ENCODE measurements at regions of chr6 and their contacts with region 1.

Region 1: GRCh38 chr6:26473758-26474438 is 16.1 kb downstream of the BTN2A1 start:
- DNase-seq: peak; percentile 91 to 94 (median 92)
- H3K4me3 ChIP-seq: peak overlapping the region; percentile 63 to 73
- H3K4me3 Mint-ChIP-seq: peak overlapping the region; percentile 84 to 99 (median 94)
- H3K27ac ChIP-seq: peak overlapping the region; percentile 81
- H3K27ac Mint-ChIP-seq: peak overlapping the region; percentile 99 to 100 (median 99)
- H3K4me1 ChIP-seq: peaks cover 52% of the 10 kb centered on the region
- H3K4me1 Mint-ChIP-seq: peaks cover 37 to 72% (median 51%) of the 10 kb centered on the region in 4 donors
- H3K27me3 ChIP-seq: no peaks in the 10 kb centered on the region
- H3K27me3 Mint-ChIP-seq: no peaks in the 10 kb centered on the region

Region 2: DNA sequence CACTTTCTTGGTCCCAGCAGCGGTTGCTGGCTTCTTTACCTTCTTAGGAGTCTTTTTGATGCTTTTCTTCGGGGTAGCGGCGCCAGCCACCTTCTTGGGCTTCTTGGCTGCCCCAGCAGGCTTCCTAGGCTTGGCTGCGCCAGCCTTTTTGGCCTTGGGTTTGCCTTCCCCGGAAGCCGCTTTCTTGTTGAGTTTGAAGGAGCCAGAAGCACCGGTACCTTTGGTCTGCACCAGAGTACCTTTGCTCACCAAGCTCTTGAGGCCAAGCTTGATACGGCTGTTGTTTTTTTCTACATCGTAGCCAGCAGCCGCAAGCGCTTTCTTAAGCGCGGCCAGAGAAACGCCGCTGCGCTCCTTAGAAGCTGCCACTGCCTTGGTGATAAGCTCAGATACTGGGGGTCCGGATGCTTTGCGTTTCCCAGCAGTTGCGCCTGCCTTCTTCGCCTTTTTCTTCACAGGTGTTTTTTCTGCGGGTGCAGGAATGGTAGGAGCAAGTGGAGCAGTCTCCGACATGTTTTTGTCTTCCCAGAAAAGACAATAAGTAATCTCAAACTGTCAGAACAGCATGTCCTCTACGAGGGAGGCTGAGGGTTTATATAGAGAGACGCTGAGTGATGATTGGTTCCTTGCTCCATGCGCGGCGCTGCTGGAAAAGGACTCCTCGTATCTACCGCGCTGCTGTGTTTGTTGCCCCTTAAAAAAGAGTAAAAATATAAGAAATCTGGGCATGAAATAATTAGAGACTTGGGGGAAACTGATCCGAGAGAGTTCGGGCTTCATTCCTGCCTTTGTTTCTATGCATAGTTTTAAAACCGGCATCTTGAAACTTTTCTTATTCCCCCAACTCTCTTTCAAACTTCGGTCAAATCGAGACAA is 239.2 kb before region 1 on chr6:
- CTCF ChIA-PET with region 1: interaction called, 3 read pairs
- POLR2A ChIA-PET with region 1: interaction called, 13 read pairs
- intact Hi-C with region 1: no loop called
- DNase-seq: peak; percentile 70 to 87 (median 85)
- H3K4me3 ChIP-seq: peak overlapping the region; percentile 66 to 95
- H3K4me3 Mint-ChIP-seq: peak overlapping the region; percentile 93 to 99 (median 96)
- H3K27ac ChIP-seq: peak overlapping the region; percentile 83
- H3K27ac Mint-ChIP-seq: peak overlapping the region; percentile 90 to 99 (median 96)
- H3K4me1 ChIP-seq: peaks cover 23% of the 10 kb centered on the region
- H3K4me1 Mint-ChIP-seq: peaks cover 18 to 43% (median 26%) of the 10 kb centered on the region in 4 donors
- H3K27me3 ChIP-seq: no peaks in the 10 kb centered on the region
- H3K27me3 Mint-ChIP-seq: no peaks in the 10 kb centered on the region

Region 3: GRCh38 chr6:26383624-26384417 is 90.1 kb before region 1 on chr6:
- CTCF ChIA-PET with region 1: no interaction called
- POLR2A ChIA-PET with region 1: interaction called, 14 read pairs
- intact Hi-C with region 1: no loop called
- DNase-seq: no peak
- H3K4me3 ChIP-seq: peak overlapping the region; percentile 80 to 85
- H3K4me3 Mint-ChIP-seq: peak overlapping the region; percentile 98 to 100 (median 99)
- H3K27ac ChIP-seq: peak overlapping the region; percentile 88
- H3K27ac Mint-ChIP-seq: peak overlapping the region; percentile 70 to 100 (median 98)
- H3K4me1 ChIP-seq: peaks cover 10% of the 10 kb centered on the region
- H3K4me1 Mint-ChIP-seq: peaks cover 18 to 36% (median 31%) of the 10 kb centered on the region in 4 donors
- H3K27me3 ChIP-seq: no peaks in the 10 kb centered on the region
- H3K27me3 Mint-ChIP-seq: no peaks in the 10 kb centered on the region

Region 4: GRCh38 chr6:26445934-26446667 is 27.8 kb before region 1 on chr6:
- CTCF ChIA-PET with region 1: interaction called, 4 read pairs
- POLR2A ChIA-PET with region 1: interaction called, 30 read pairs
- intact Hi-C with region 1: no loop called
- DNase-seq: peak; percentile 12 to 66 (median 17)
- H3K4me3 ChIP-seq: peak overlapping the region in 1 of 2 donors; percentile 9
- H3K4me3 Mint-ChIP-seq: peak overlapping the region; percentile 12 to 87 (median 72)
- H3K27ac ChIP-seq: peak overlapping the region; percentile 55
- H3K27ac Mint-ChIP-seq: peak overlapping the region; percentile 79 to 94 (median 91)
- H3K4me1 ChIP-seq: peaks cover 56% of the 10 kb centered on the region
- H3K4me1 Mint-ChIP-seq: peaks cover 35 to 68% (median 57%) of the 10 kb centered on the region in 4 donors
- H3K27me3 ChIP-seq: no peaks in the 10 kb centered on the region
- H3K27me3 Mint-ChIP-seq: no peaks in the 10 kb centered on the region

Region 5: DNA sequence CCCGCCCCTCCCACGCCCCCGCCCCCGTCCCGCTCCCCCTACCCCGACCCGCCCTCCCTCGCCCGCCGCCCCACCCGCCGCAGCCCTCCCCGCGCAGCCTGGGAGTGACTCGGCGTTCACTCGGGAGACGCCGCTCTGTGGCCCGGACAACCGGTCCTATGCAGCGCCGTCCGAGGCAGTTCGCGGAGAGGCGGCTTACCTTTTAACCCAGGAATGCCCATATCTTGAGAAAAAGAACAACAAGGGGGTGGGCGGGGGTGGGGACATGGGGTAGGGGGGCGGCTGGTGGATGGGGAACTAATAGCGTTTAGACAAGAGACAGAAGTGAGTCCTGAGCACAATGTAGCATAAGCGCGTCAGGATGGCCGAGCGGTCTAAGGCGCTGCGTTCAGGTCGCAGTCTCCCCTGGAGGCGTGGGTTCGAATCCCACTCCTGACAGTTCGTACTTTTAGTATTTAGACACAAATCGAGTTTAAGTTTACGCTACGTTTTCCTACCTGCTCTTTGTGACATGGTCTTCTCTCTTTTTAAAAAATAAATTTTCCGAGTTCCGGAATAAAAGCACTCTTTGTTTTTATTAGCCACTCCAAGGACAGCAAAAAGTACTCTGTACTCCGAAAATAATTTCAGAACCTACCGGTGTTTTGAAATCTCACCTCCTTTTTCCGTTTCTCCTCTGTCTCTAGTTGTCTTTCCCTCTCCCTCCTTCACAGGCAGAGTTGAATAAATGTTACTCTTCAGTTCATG is 47.1 kb after region 1 on chr6:
- CTCF ChIA-PET with region 1: no interaction called
- POLR2A ChIA-PET with region 1: interaction called, 77 read pairs
- intact Hi-C with region 1: loop called (anchors 1 kb)
- DNase-seq: peak; percentile 87 to 89 (median 88)
- H3K4me3 ChIP-seq: peak overlapping the region; percentile 64 to 69
- H3K4me3 Mint-ChIP-seq: peak overlapping the region; percentile 80 to 97 (median 92)
- H3K27ac ChIP-seq: peak overlapping the region; percentile 64
- H3K27ac Mint-ChIP-seq: peak overlapping the region; percentile 82 to 99 (median 96)
- H3K4me1 ChIP-seq: peaks cover 8% of the 10 kb centered on the region
- H3K4me1 Mint-ChIP-seq: peaks cover 27 to 44% (median 30%) of the 10 kb centered on the region in 4 donors
- H3K27me3 ChIP-seq: no peaks in the 10 kb centered on the region
- H3K27me3 Mint-ChIP-seq: peaks cover 1 to 2% of the 10 kb centered on the region in 2 donors

Region 6: DNA sequence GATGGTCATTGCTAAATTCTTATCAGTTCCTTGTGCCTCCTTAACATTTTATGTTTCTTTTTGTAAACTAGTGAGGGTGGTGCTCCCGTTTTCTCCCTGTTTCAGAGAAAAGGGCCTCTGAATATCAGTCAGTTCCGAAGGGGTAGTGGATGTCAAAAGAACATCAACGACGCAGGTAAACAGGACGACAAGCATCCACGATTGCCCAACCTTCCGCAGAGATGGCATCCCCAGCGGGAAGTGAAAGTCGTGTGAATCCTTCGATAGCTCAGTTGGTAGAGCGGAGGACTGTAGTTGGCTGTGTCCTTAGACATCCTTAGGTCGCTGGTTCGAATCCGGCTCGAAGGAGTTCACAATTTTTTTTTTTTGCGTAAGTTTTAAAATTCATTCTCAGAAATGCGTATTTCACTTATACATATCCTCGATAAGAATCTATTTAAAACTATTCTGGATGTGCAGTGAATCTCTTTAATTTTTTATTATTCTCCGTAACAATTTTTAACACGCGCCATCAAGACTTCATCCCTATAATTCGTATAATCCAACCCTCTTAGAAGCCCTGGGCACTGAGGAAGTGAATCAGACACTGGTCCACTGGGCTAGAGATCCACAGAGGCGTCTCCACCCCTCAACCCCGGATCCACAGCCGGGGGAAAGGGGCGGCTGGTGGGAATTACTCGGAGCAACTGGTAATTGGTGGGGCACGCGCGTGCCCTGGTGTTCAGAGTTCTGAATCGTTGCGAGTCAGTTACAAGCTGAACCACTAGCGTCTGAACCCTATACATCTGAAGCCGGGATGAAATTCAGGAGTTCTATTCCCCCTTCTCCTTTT is 94.9 kb after region 1 on chr6:
- CTCF ChIA-PET with region 1: interaction called, 4 read pairs
- POLR2A ChIA-PET with region 1: interaction called, 23 read pairs
- intact Hi-C with region 1: loop called (anchors 1 kb)
- DNase-seq: peak; percentile 96 to 98 (median 97)
- H3K4me3 ChIP-seq: peak overlapping the region; percentile 74 to 82
- H3K4me3 Mint-ChIP-seq: peak overlapping the region; percentile 94 to 99 (median 96)
- H3K27ac ChIP-seq: peak overlapping the region; percentile 62
- H3K27ac Mint-ChIP-seq: peak overlapping the region; percentile 92 to 100 (median 98)
- H3K4me1 ChIP-seq: peaks cover 9% of the 10 kb centered on the region
- H3K4me1 Mint-ChIP-seq: peaks cover 17 to 34% (median 23%) of the 10 kb centered on the region in 4 donors
- H3K27me3 ChIP-seq: no peaks in the 10 kb centered on the region
- H3K27me3 Mint-ChIP-seq: peaks cover 0 to 10% of the 10 kb centered on the region in 2 donors